ENCODE measurements at regions of chr7 and their contacts with region 1.

Region 1: DNA sequence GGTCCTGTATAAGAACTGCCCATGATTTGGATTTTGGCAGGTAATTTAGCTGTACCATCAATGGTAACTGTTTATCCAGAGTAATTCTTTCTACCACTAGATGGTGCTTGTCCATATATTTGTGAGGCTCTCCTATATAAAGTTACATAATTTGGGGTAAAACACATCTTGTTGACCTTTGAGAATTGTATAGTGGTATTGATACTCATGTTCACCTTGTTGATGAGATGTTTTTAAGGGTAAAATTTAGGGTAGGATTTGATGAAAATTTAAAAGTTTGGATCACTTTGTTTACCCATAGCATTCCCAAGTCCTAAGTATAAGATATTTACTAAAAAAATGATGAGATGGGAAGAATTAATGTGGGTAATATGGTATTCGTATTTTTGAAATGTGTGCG is 31.6 kb downstream of the ST7 start:
- DNase-seq: peak; percentile 45
- ATAC-seq: no peak
- H3K4me3 ChIP-seq: no peak overlapping the region
- H3K4me3 Mint-ChIP-seq: no peak overlapping the region
- H3K27ac ChIP-seq: no peak overlapping the region
- H3K27ac Mint-ChIP-seq: no peak overlapping the region
- H3K4me1 ChIP-seq: no peaks in the 10 kb centered on the region
- H3K4me1 Mint-ChIP-seq: no peaks in the 10 kb centered on the region
- H3K27me3 ChIP-seq: no peaks in the 10 kb centered on the region
- H3K27me3 Mint-ChIP-seq: no peaks in the 10 kb centered on the region
- CTCF ChIP-seq: peak; percentile 80

Region 2: GRCh38 chr7:117012696-117013095 is 27.8 kb after region 1 on chr7:
- CTCF ChIA-PET with region 1: interaction called, 23 read pairs
- POLR2A ChIA-PET with region 1: no interaction called
- intact Hi-C with region 1: no loop called
- DNase-seq: peak; percentile 27
- ATAC-seq: no peak
- H3K4me3 ChIP-seq: no peak overlapping the region
- H3K4me3 Mint-ChIP-seq: no peak overlapping the region
- H3K27ac ChIP-seq: no peak overlapping the region
- H3K27ac Mint-ChIP-seq: no peak overlapping the region
- H3K4me1 ChIP-seq: peaks cover 25 to 30% of the 10 kb centered on the region in 2 donors
- H3K4me1 Mint-ChIP-seq: peaks cover 47% of the 10 kb centered on the region
- H3K27me3 ChIP-seq: no peaks in the 10 kb centered on the region
- H3K27me3 Mint-ChIP-seq: no peaks in the 10 kb centered on the region
- CTCF ChIP-seq: peak; percentile 31

Region 3: DNA sequence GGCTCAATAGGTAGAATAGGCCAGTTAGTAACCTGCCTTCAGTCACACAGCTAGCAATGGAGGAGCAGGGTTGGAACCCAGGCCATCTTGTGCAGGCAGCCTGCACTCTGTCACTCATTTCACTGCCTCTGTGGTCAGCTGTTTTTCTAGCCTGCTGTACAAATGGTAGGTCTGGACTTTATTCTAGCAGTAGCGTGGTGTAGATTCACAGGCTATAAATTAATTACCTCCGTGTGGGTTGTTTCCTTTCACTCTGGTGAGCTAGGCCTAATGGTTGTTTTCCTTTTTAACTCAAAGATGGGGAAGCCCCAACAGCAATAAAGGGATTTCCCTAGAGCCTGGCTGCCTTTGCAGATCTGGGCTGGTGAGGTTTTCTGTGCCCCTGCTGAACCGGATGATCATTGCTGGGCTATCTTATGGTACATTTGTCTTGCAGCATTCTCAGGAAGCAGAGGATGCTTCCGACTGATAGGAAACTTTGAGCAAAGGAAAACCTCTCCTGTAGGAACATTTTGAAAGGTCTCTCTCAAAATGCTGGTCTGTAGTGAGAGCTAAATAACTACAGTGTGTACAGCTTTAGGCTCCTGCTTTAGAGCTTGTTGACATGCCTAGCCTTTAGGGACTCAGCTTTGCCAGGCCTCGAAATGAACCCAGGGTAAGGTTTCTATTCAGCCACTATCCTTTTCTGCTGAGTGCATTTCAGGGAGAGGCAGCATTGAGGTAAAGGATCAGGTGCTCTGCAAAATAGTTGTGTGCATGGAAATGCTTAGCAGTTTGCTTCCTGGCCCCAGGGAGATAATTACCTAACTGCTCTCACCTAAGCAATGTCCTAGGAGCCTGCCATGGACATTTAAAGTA is 125.8 kb after region 1 on chr7:
- CTCF ChIA-PET with region 1: interaction called, 226 read pairs
- POLR2A ChIA-PET with region 1: no interaction called
- intact Hi-C with region 1: no loop called
- DNase-seq: peak; percentile 51
- ATAC-seq: peak; percentile 92
- H3K4me3 ChIP-seq: no peak overlapping the region
- H3K4me3 Mint-ChIP-seq: peak overlapping the region; percentile 57
- H3K27ac ChIP-seq: peak overlapping the region in 1 of 2 donors; percentile 32
- H3K27ac Mint-ChIP-seq: peak overlapping the region; percentile 83
- H3K4me1 ChIP-seq: peaks cover 11% of the 10 kb centered on the region in 2 donors
- H3K4me1 Mint-ChIP-seq: peaks cover 13% of the 10 kb centered on the region
- H3K27me3 ChIP-seq: no peaks in the 10 kb centered on the region
- H3K27me3 Mint-ChIP-seq: no peaks in the 10 kb centered on the region
- CTCF ChIP-seq: no peak

Region 4: DNA sequence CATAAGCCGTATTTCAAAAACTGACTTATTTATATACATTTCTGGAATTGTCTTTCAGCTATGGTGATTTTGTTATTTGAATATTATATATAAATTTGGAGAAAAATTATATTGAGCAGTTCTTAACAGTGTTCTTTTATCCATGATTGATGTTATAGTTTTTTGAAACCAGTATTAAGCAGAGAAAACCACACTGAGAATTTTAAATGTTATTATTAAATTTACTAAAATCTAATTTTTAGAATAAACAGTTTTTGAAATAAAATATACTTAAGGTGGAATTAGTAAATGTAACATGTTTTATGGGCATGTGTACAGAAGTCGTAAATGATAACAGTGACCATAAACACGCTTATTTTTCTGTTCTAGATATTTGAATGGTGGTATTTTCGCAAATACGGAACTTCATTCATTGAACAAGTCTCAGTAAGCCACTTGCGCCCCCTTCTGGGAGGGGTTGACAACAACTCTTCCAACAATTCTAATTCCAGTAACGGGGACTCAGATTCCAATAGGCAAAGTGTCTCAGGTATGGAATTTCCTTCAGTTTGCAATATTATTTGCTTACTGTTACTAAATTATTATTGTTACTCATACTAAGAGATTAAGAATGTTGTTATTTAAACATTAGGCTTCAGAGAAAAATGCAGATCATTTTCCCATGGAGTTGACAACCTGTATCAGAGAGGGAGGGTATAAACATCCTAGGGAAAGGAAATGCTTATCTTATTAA is 134.4 kb after region 1 on chr7:
- CTCF ChIA-PET with region 1: interaction called, 226 read pairs
- POLR2A ChIA-PET with region 1: no interaction called
- intact Hi-C with region 1: loop called (anchors 1 kb)
- DNase-seq: peak; percentile 74
- ATAC-seq: peak; percentile 65
- H3K4me3 ChIP-seq: no peak overlapping the region
- H3K4me3 Mint-ChIP-seq: no peak overlapping the region
- H3K27ac ChIP-seq: no peak overlapping the region
- H3K27ac Mint-ChIP-seq: no peak overlapping the region
- H3K4me1 ChIP-seq: no peaks in the 10 kb centered on the region
- H3K4me1 Mint-ChIP-seq: no peaks in the 10 kb centered on the region
- H3K27me3 ChIP-seq: no peaks in the 10 kb centered on the region
- H3K27me3 Mint-ChIP-seq: no peaks in the 10 kb centered on the region
- CTCF ChIP-seq: peak; percentile 89

Region 5: DNA sequence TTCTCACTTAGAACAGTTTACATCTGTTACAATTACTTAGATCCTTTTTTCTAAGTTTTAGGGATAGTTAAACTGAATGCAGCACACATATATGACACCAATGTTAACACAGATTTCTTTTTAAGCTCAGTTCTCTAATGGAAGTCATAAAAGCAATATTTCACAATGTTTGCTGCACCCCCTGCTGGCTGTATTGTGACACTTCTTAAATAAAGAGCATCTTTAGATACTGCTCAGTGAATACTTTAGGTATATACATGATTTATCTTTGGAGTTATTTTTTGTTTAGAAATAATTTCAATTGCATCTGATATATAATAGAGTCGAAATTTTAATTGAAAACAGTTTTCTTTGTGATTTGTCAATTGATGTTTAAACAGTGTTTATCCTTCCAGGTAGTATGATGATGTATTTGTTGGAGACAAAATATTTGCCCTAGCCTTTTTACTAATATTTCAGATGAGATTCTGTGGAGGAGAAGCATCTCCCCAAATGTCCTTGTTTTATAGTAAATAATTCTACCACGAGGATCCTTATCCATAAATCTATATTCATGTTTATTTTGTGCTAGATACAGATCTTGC is 142.8 kb after region 1 on chr7:
- CTCF ChIA-PET with region 1: interaction called, 226 read pairs
- POLR2A ChIA-PET with region 1: no interaction called
- intact Hi-C with region 1: no loop called
- DNase-seq: peak; percentile 55
- ATAC-seq: no peak
- H3K4me3 ChIP-seq: no peak overlapping the region
- H3K4me3 Mint-ChIP-seq: no peak overlapping the region
- H3K27ac ChIP-seq: no peak overlapping the region
- H3K27ac Mint-ChIP-seq: no peak overlapping the region
- H3K4me1 ChIP-seq: no peaks in the 10 kb centered on the region
- H3K4me1 Mint-ChIP-seq: no peaks in the 10 kb centered on the region
- H3K27me3 ChIP-seq: no peaks in the 10 kb centered on the region
- H3K27me3 Mint-ChIP-seq: no peaks in the 10 kb centered on the region
- CTCF ChIP-seq: peak; percentile 93